ENCODE measurements at regions of chr5 and their contacts with region 1.

Region 1: GRCh38 chr5:133111299-133111698 is 59.5 kb downstream of the HSPA4 start:
- DNase-seq: peak; percentile 76 to 93
- H3K4me3 ChIP-seq: no peak overlapping the region
- H3K27ac ChIP-seq: no peak overlapping the region
- H3K4me1 ChIP-seq: no peaks in the 10 kb centered on the region; a peak in 1 of 7 replicates
- H3K27me3 ChIP-seq: no peaks in the 10 kb centered on the region
- CTCF ChIP-seq: peak; percentile 91 to 97 (median 95)
- EP300 ChIP-seq: no peak
- POLR2A ChIP-seq: no peak
- RAD21 ChIP-seq: peak; percentile 100

Region 2: DNA sequence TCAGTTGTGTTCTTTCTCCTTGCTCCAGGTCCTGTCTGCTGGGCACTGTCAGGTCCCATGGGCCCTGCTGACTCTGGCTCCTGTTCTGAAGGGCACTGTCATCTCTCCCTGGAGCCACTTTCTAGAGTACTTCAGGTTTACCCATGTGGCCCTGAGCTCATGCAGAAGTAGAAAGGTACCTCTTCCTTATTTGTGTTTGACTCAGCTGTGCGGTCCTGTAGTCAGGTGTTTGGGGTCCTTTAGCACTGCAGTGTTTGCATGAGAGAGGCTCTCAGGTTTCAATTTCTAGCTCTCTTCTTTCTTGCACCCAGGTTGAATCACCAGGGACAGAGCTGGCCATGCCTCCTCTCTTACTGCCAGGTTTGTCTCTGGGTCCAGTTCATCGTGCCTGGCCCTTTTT is 12.0 kb after region 1 on chr5:
- CTCF ChIA-PET with region 1: interaction called, 13 read pairs
- POLR2A ChIA-PET with region 1: interaction called, 4 read pairs
- DNase-seq: no peak
- H3K4me3 ChIP-seq: no peak overlapping the region
- H3K27ac ChIP-seq: no peak overlapping the region
- H3K4me1 ChIP-seq: no peaks in the 10 kb centered on the region
- H3K27me3 ChIP-seq: peaks cover 0 to 2% (median under 1%) of the 10 kb centered on the region in 4 experiments; a peak in 1 of 7 replicates
- CTCF ChIP-seq: no peak
- EP300 ChIP-seq: no peak
- POLR2A ChIP-seq: no peak
- RAD21 ChIP-seq: no peak

Region 3: DNA sequence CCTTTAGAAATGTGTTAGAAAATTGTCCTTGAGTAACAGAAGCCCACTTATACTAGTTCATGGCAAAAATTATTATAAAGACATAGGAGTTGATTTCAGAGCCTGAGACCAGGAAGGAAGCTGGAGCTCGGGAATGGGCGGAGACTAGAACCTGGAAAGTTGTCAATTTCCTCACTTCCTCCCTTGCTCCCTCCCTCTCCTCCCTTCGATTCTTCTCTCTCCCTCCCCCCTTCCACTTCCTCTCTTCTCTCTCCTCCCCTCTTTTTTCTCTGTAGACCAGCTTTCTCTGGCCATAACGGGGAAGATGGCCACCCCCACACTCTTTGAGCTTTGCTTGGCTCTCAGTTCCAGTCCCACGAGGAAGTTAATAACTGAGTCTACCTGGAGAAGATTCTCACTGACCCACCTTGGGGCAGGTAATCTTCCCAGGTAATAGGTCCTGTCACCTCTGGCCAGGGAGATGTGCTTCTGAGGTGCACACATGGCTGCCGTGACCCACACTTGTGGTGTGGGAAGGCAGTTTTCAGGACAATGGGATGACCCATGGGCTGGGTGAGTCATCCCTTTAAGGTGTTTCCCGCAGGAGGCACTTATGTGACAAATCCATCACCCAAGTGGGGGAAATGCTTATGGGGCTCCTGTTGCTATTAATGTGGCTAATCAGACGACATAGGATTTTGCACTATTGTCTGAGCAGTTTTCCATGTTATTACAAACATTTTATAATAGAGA is 19.3 kb after region 1 on chr5:
- CTCF ChIA-PET with region 1: interaction called, 11 read pairs
- POLR2A ChIA-PET with region 1: interaction called, 3 read pairs
- DNase-seq: no peak
- H3K4me3 ChIP-seq: no peak overlapping the region
- H3K27ac ChIP-seq: no peak overlapping the region
- H3K4me1 ChIP-seq: no peaks in the 10 kb centered on the region; a peak in 1 of 7 replicates
- H3K27me3 ChIP-seq: no peaks in the 10 kb centered on the region
- CTCF ChIP-seq: no peak
- EP300 ChIP-seq: no peak
- POLR2A ChIP-seq: no peak
- RAD21 ChIP-seq: no peak

Region 4: GRCh38 chr5:133203317-133204305 is 92.3 kb after region 1 on chr5:
- CTCF ChIA-PET with region 1: interaction called, 13 read pairs
- POLR2A ChIA-PET with region 1: interaction called, 4 read pairs
- DNase-seq: no peak
- H3K4me3 ChIP-seq: no peak overlapping the region
- H3K27ac ChIP-seq: no peak overlapping the region
- H3K4me1 ChIP-seq: no peaks in the 10 kb centered on the region
- H3K27me3 ChIP-seq: no peaks in the 10 kb centered on the region
- CTCF ChIP-seq: no peak
- EP300 ChIP-seq: no peak
- POLR2A ChIP-seq: no peak
- RAD21 ChIP-seq: no peak

Region 5: GRCh38 chr5:133225671-133226152 is 114.4 kb after region 1 on chr5:
- CTCF ChIA-PET with region 1: interaction called, 80 read pairs
- POLR2A ChIA-PET with region 1: no interaction called
- DNase-seq: no peak
- H3K4me3 ChIP-seq: no peak overlapping the region
- H3K27ac ChIP-seq: no peak overlapping the region
- H3K4me1 ChIP-seq: peaks cover 0 to 5% (median 2%) of the 10 kb centered on the region in 4 experiments; a peak in 3 of 7 replicates
- H3K27me3 ChIP-seq: no peaks in the 10 kb centered on the region
- CTCF ChIP-seq: no peak
- EP300 ChIP-seq: no peak
- POLR2A ChIP-seq: no peak
- RAD21 ChIP-seq: no peak

Region 6: GRCh38 chr5:133260715-133261114 is 149.4 kb after region 1 on chr5:
- CTCF ChIA-PET with region 1: interaction called, 16 read pairs
- POLR2A ChIA-PET with region 1: no interaction called
- DNase-seq: no peak
- H3K4me3 ChIP-seq: no peak overlapping the region
- H3K27ac ChIP-seq: no peak overlapping the region
- H3K4me1 ChIP-seq: no peaks in the 10 kb centered on the region
- H3K27me3 ChIP-seq: no peaks in the 10 kb centered on the region
- CTCF ChIP-seq: peak; percentile 2 to 26 (median 11); a peak in 3 of 4 replicates
- EP300 ChIP-seq: no peak
- POLR2A ChIP-seq: no peak
- RAD21 ChIP-seq: peak; percentile 41 to 54; a peak in 3 of 4 replicates

Measured in H1 (cell line).